ENCODE measurements at regions of chr3 and their contacts with region 1.

Region 1: DNA sequence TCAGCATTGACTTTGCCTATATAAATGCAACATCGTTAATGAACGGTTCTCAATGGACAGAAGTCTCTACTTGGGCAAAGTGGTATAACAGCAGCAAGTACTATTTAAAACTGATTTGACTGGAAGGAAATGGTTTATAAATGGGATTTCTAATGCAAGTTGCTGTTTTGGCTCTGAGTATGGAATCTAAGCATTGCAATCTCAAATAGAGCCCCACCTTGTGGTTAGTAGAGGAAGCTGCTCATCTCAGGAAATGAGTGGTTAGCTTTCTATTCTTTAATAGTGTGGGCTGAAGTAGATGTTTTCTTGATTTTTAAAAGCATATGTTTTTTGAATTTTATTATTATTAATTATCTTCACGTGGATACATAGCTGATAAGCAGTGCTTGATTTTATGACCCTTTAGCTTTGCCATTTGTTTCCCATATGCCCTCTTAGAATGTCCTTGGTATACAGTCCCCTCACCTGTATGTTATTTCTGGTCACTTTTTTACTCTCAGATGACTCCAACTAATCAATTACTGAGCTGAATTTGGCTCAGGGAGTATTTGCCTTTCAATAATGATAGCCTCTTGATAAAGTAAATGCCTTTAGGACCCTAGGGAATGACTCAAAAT is 67.1 kb downstream of the OXSM start:
- DNase-seq: peak; percentile 45 to 69 (median 68)
- H3K4me3 ChIP-seq: no peak overlapping the region
- H3K27ac ChIP-seq: no peak overlapping the region
- H3K4me1 ChIP-seq: no peaks in the 10 kb centered on the region
- H3K27me3 ChIP-seq: no peaks in the 10 kb centered on the region

Region 2: GRCh38 chr3:25844891-25845290 is 12.1 kb before region 1 on chr3:
- CTCF ChIA-PET with region 1: interaction called, 15 read pairs
- POLR2A ChIA-PET with region 1: no interaction called
- DNase-seq: no peak
- H3K4me3 ChIP-seq: no peak overlapping the region
- H3K27ac ChIP-seq: no peak overlapping the region
- H3K4me1 ChIP-seq: no peaks in the 10 kb centered on the region
- H3K27me3 ChIP-seq: no peaks in the 10 kb centered on the region

Region 3: DNA sequence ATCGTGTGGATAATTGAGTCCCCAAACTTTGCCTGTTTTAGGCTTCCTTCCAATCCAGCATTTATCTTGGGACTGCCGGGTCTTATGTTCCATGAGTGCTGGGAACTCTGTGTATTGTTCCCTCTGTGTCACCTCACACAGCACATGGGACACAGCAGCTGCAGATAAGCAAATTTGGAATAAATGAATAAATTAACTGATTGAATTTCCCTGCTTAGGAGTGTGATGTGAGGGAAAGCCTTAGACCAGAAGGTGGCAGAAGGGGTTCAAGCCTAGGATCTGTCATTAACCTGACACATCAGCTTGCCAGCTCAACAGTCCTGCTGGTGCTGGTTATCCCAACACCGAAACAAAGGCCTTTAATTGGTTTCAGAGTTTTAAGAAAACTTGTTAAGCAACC is 47.2 kb after region 1 on chr3:
- CTCF ChIA-PET with region 1: no interaction called
- POLR2A ChIA-PET with region 1: no interaction called
- DNase-seq: no peak
- H3K4me3 ChIP-seq: no peak overlapping the region
- H3K27ac ChIP-seq: no peak overlapping the region
- H3K4me1 ChIP-seq: no peaks in the 10 kb centered on the region
- H3K27me3 ChIP-seq: peaks cover 0 to 2% (median 0%) of the 10 kb centered on the region in 5 experiments